ENCODE measurements at regions of chr17 and their contacts with region 1.

Region 1: DNA sequence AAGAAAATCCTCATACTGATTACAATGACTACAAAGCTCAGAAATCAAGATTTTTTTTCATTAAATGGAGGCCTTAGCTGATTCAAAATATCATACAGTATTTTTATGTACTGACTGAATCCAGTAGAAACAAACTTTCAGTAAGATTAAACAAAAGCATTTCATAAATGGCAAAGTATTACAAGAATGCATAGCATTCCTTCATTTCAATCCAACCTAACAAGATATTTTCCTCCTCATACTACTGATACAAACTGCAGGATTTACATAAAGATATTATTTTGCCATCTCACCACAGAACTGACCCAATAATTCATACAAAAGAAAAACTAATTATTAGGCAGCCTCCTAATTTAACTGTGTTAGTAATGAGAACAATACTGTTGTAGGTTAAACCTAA is 6.2 kb upstream of the KANSL1 start:
- DNase-seq: no peak
- ATAC-seq: no peak
- H3K4me3 ChIP-seq: no peak overlapping the region
- H3K4me3 Mint-ChIP-seq: no peak overlapping the region
- H3K27ac ChIP-seq: no peak overlapping the region
- H3K27ac Mint-ChIP-seq: peak overlapping the region; percentile 18 to 34
- H3K4me1 ChIP-seq: peaks cover 35 to 40% of the 10 kb centered on the region in 2 experiments
- H3K4me1 Mint-ChIP-seq: peaks cover 64 to 93% (median 67%) of the 10 kb centered on the region in 3 donors
- H3K27me3 ChIP-seq: no peaks in the 10 kb centered on the region
- H3K27me3 Mint-ChIP-seq: no peaks in the 10 kb centered on the region

Region 2: GRCh38 chr17:46007461-46007965 is 191.9 kb before region 1 on chr17:
- CTCF ChIA-PET with region 1: no interaction called
- POLR2A ChIA-PET with region 1: interaction called in 1 of 2 experiments, 23 read pairs
- DNase-seq: no peak
- ATAC-seq: no peak
- H3K4me3 ChIP-seq: no peak overlapping the region
- H3K4me3 Mint-ChIP-seq: no peak overlapping the region
- H3K27ac ChIP-seq: no peak overlapping the region
- H3K27ac Mint-ChIP-seq: no peak overlapping the region
- H3K4me1 ChIP-seq: peaks cover 0 to 5% of the 10 kb centered on the region in 2 experiments
- H3K4me1 Mint-ChIP-seq: peaks cover 0 to 1% (median 0%) of the 10 kb centered on the region in 3 donors
- H3K27me3 ChIP-seq: peaks cover 0 to 19% of the 10 kb centered on the region in 2 experiments
- H3K27me3 Mint-ChIP-seq: peaks cover 0 to 5% of the 10 kb centered on the region in 2 donors

Measured in T-cell (primary cell).